GM10248 (cell line): ENCODE measurements at regions of chr2 and their contacts with region 1.

Region 1: GRCh38 chr2:157302492-157303099 is 23.0 kb downstream of the ERMN start:
- DNase-seq: peak; percentile 34
- CTCF ChIP-seq: peak; percentile 61

Region 2: GRCh38 chr2:157283468-157283867 is 19.1 kb before region 1 on chr2:
- CTCF ChIA-PET with region 1: interaction called, 22 read pairs
- POLR2A ChIA-PET with region 1: no interaction called
- DNase-seq: no peak
- CTCF ChIP-seq: no peak

Region 3: DNA sequence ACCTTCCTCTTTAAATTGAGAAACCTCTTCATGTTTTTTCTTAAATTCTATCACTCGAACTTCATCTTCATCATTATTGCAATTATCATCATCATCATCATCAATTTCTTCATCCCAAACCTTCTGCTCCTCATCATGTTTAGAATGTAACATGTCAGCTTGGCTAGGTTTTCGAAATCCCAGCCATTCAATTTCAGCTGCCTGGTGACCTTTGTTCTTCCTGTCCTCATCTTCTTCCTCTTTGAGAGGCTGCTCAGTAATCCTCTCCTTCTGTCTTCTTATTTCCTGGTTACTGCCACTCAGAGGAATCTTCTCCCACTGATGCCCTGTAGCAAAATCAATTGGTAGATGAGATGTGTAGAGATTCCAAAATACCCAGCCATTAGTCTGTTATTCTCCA is 18.9 kb after region 1 on chr2:
- CTCF ChIA-PET with region 1: interaction called, 258 read pairs
- POLR2A ChIA-PET with region 1: no interaction called
- DNase-seq: no peak
- CTCF ChIP-seq: no peak

Region 4: GRCh38 chr2:157420771-157421323 is 118.3 kb after region 1 on chr2:
- CTCF ChIA-PET with region 1: no interaction called
- POLR2A ChIA-PET with region 1: no interaction called
- DNase-seq: no peak
- CTCF ChIP-seq: no peak

Region 5: GRCh38 chr2:157509744-157510143 is 207.1 kb after region 1 on chr2:
- CTCF ChIA-PET with region 1: interaction called, 10 read pairs
- POLR2A ChIA-PET with region 1: no interaction called
- DNase-seq: no peak
- CTCF ChIP-seq: no peak

Region 6: GRCh38 chr2:157751462-157752058 is 449.0 kb after region 1 on chr2:
- CTCF ChIA-PET with region 1: interaction called, 10 read pairs
- POLR2A ChIA-PET with region 1: no interaction called
- DNase-seq: no peak
- CTCF ChIP-seq: peak; percentile 27

Region 7: GRCh38 chr2:158024288-158024898 is 721.8 kb after region 1 on chr2:
- CTCF ChIA-PET with region 1: interaction called, 16 read pairs
- POLR2A ChIA-PET with region 1: no interaction called
- DNase-seq: peak; percentile 41
- CTCF ChIP-seq: peak; percentile 84